Endothelial cell of umbilical vein (primary cell): ENCODE measurements at regions of chr6 and their contacts with region 1.

Region 1: DNA sequence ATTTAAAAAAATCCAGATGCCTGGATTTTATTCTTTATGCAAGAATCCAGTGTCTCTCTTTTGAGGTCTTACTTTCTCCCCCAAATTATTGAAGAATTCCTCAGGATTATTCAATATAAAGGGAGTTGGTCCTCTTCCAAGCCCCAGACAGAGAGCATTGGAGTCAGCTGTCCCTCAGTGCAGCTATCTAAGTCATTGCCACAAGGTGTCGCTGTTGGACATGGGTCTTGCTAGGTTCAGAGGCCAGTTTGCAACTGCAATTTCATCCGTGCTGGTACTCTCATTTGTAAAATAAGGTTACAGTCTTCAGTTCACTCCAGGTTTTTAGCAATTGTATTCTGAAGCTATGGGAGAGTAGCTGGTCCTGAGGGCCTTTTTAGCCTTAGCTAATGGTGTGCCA is 27.8 kb downstream of the CCN2 start:
- DNase-seq: peak; percentile 41
- H3K4me3 ChIP-seq: no peak overlapping the region
- H3K27ac ChIP-seq: no peak overlapping the region
- H3K4me1 ChIP-seq: no peaks in the 10 kb centered on the region
- H3K27me3 ChIP-seq: no peaks in the 10 kb centered on the region
- CTCF ChIP-seq: peak; percentile 64 to 72
- POLR2A ChIP-seq: no peak

Region 2: DNA sequence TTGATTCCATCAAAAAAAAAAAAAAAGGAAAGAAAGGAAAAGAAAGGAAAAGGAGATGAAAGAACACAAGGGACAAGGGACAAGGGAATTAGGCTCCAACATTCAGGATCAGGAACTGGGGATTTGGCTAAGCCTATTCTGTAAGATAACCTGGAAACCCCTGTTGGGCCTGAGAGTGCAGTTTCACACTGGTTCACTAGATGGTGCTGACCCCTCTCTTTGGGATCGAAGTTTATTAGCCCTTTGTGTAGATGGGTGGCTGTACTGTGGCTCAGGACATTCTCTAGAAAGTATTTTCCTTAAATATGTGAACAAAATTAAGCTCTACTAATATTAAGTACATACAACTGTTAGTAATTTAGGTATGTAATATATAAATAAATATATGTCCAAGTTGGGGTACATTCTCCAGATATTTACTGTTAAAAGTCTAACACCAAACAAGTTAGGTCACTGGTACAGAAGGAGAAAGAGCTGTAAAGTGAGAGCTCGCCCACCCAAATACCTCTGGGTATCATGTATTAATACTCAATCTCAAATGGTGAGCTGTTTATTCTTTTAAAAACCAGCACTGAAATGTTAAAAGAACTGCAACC is 228.4 kb before region 1 on chr6:
- CTCF ChIA-PET with region 1: interaction called, 11 read pairs
- POLR2A ChIA-PET with region 1: no interaction called
- dilution Hi-C with region 1: no loop called
- intact Hi-C with region 1: no loop called
- DNase-seq: peak; percentile 74
- H3K4me3 ChIP-seq: no peak overlapping the region
- H3K27ac ChIP-seq: no peak overlapping the region
- H3K4me1 ChIP-seq: no peaks in the 10 kb centered on the region
- H3K27me3 ChIP-seq: no peaks in the 10 kb centered on the region
- CTCF ChIP-seq: peak; percentile 79 to 80
- POLR2A ChIP-seq: no peak

Region 3: DNA sequence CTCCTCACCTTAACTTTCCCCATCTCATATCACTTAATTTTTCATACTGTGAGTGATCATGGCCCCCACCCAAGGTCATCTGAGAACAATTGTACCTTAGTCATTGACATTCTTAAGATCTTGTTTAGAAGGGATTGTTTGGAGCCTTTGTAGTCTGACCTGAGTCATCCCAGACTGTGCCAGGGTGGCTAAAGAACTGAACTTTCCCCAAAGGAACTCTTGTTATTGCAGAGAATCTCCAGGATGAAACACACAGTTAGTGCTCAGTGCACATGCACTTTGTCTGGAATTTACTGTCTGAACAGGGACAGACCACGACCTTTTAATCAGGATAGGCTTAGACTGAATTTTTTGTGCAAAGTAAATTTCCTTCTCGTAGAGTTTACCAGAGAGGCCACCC is 140.4 kb after region 1 on chr6:
- CTCF ChIA-PET with region 1: interaction called, 3 read pairs
- POLR2A ChIA-PET with region 1: no interaction called
- dilution Hi-C with region 1: no loop called
- intact Hi-C with region 1: loop called (anchors 1 kb)
- DNase-seq: peak; percentile 98
- H3K4me3 ChIP-seq: no peak overlapping the region
- H3K27ac ChIP-seq: peak overlapping the region; percentile 99
- H3K4me1 ChIP-seq: peaks cover 72% of the 10 kb centered on the region
- H3K27me3 ChIP-seq: no peaks in the 10 kb centered on the region
- CTCF ChIP-seq: no peak
- POLR2A ChIP-seq: no peak

Region 4: GRCh38 chr6:132218059-132218696 is 294.8 kb after region 1 on chr6:
- CTCF ChIA-PET with region 1: interaction called, 148 read pairs
- POLR2A ChIA-PET with region 1: no interaction called
- dilution Hi-C with region 1: no loop called
- intact Hi-C with region 1: loop called (anchors 1 kb)
- DNase-seq: peak; percentile 63
- H3K4me3 ChIP-seq: no peak overlapping the region
- H3K27ac ChIP-seq: no peak overlapping the region
- H3K4me1 ChIP-seq: peaks cover 5% of the 10 kb centered on the region
- H3K27me3 ChIP-seq: no peaks in the 10 kb centered on the region
- CTCF ChIP-seq: peak in 1 of 2 donors; percentile 25
- POLR2A ChIP-seq: no peak

Region 5: DNA sequence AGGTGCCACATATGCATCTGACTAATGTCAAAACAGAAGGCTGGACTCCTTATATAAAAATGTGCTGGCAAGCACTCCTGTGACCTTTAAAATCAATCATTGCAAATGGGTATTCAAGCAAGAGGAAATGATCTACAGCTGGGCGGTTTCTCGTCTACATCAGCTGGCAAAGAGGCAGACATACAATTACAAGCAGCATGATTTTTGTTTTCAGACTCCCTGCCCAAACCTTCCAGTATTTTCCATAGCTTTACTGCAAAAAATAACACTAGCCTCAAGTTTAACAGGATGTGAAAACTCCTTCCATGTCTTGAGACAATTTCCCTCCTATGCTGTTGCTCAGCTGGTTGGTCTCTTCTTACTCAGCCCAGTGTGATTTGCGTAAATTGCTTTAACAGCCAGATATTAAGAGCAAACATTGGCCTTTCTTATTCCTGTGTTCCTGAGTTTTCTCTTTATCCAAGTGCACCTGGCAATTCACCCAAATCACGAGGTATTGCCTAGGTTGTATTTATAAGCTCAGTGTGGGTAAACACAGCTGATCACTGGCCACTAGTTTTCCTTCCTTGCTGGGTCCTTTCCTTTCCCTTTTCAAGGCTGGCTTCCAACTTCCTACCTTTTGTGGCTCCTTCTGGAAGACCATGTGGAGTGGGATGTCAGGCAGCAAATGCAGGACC is 347.5 kb after region 1 on chr6:
- CTCF ChIA-PET with region 1: interaction called, 222 read pairs
- POLR2A ChIA-PET with region 1: no interaction called
- dilution Hi-C with region 1: no loop called
- intact Hi-C with region 1: no loop called
- DNase-seq: peak; percentile 83
- H3K4me3 ChIP-seq: no peak overlapping the region
- H3K27ac ChIP-seq: no peak overlapping the region
- H3K4me1 ChIP-seq: no peaks in the 10 kb centered on the region
- H3K27me3 ChIP-seq: peaks cover 0 to 4% of the 10 kb centered on the region in 2 experiments
- CTCF ChIP-seq: no peak
- POLR2A ChIP-seq: no peak

Region 6: DNA sequence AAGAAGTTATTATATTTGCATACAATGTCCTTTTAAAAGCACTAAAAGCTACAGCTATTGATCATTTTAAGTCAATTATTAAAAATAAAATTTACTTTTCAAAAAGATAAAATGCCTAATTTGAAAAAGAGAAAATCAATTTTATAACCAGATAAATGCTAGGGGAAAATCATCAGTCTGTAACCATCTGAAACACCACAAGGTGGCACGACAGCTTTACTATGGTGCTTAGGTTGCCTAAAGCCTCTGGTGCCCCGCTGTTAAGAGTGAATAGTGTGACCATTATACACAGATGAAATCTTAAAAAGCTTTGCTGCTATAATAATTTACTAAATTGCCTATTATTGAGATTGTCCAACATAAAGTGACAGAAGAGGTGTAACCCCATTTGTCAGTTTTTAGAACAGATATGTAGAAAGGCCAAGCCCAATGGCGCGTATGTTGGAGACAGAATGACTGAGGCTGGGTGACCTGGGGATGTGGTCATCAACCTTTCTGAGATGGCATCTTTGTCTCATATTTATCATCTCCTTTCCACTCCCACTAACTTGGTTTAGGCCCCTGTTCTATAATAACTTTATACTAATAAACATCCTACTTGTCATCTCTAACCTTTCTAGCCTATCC is 377.1 kb after region 1 on chr6:
- CTCF ChIA-PET with region 1: interaction called, 192 read pairs
- POLR2A ChIA-PET with region 1: no interaction called
- dilution Hi-C with region 1: no loop called
- intact Hi-C with region 1: loop called (anchors 1 kb)
- DNase-seq: peak; percentile 53
- H3K4me3 ChIP-seq: no peak overlapping the region
- H3K27ac ChIP-seq: no peak overlapping the region
- H3K4me1 ChIP-seq: no peaks in the 10 kb centered on the region
- H3K27me3 ChIP-seq: peaks cover 12 to 16% of the 10 kb centered on the region in 2 experiments
- CTCF ChIP-seq: peak; percentile 38 to 47
- POLR2A ChIP-seq: no peak

Region 7: GRCh38 chr6:132813173-132813856 is 890.0 kb after region 1 on chr6:
- CTCF ChIA-PET with region 1: no interaction called
- POLR2A ChIA-PET with region 1: no interaction called
- dilution Hi-C with region 1: no loop called
- intact Hi-C with region 1: loop called (anchors 10 kb)
- DNase-seq: peak; percentile 75
- H3K4me3 ChIP-seq: peak overlapping the region; percentile 47 to 80 (median 55)
- H3K27ac ChIP-seq: peak overlapping the region; percentile 63
- H3K4me1 ChIP-seq: peaks cover 24% of the 10 kb centered on the region
- H3K27me3 ChIP-seq: peaks cover 4 to 5% of the 10 kb centered on the region in 2 experiments
- CTCF ChIP-seq: no peak
- POLR2A ChIP-seq: peak; percentile 38